GM12878 (cell line): ENCODE measurements at regions of chr14 and their contacts with region 1.

Region 1: DNA sequence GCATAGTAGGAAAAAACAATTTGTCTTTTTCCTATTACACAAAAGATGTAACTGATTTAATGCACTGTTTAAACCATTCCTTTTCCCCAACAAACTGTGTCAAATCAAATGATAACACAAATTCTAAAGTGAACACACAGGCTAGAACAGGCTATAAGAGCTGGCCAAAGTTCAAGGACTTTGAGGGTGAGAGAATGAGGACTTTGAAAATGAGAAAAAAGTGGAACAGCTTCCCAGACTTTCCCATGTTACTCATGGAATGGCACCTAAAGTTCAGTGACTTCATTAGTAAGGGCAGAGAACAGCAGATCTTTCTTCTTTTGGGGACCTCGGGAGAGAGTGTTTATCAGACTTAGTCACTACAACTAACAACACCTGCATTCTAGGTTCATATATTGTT is 22.6 kb downstream of the TMEM253 start:
- DNase-seq: no peak
- ATAC-seq: no peak
- H3K4me3 ChIP-seq: no peak overlapping the region
- H3K27ac ChIP-seq: no peak overlapping the region
- H3K4me1 ChIP-seq: no peaks in the 10 kb centered on the region
- H3K27me3 ChIP-seq: no peaks in the 10 kb centered on the region; a peak in 2 of 4 replicates
- CTCF ChIP-seq: no peak
- EP300 ChIP-seq: no peak
- POLR2A ChIP-seq: no peak
- RAD21 ChIP-seq: no peak

Region 2: DNA sequence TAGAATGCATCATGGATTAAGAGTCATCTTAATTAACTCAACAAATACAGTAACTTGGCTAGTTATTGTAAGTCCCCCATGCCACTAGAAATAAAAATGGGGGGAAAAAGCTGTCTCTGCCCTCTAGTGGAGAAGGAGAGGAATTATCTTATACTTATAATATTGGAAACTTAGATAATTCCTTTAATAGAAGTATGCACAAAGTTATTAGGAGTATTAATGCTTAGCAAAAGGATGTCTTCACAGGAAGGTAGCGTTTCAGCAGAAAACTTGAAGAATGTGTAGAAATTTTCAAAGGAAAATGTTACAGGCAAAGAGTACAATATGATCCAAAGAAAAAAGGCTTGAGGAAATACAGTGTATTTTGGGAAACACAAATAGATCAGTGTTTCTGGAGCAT is 12.6 kb after region 1 on chr14:
- CTCF ChIA-PET with region 1: interaction called, 10 read pairs
- POLR2A ChIA-PET with region 1: no interaction called
- RAD21 ChIA-PET with region 1: interaction called, 3 read pairs
- SMC1A ChIA-PET with region 1: interaction called, 3 read pairs
- in situ Hi-C with region 1: no loop called
- intact Hi-C with region 1: no loop called
- DNase-seq: no peak
- ATAC-seq: peak; percentile 44; the same call in 1 of the 3 replicates
- H3K4me3 ChIP-seq: no peak overlapping the region
- H3K27ac ChIP-seq: no peak overlapping the region
- H3K4me1 ChIP-seq: no peaks in the 10 kb centered on the region
- H3K27me3 ChIP-seq: no peaks in the 10 kb centered on the region
- CTCF ChIP-seq: peak; percentile 53 to 57 (median 55)
- EP300 ChIP-seq: no peak
- POLR2A ChIP-seq: no peak
- RAD21 ChIP-seq: peak; percentile 56